ENCODE measurements at regions of chr20 and their contacts with region 1.

Region 1: DNA sequence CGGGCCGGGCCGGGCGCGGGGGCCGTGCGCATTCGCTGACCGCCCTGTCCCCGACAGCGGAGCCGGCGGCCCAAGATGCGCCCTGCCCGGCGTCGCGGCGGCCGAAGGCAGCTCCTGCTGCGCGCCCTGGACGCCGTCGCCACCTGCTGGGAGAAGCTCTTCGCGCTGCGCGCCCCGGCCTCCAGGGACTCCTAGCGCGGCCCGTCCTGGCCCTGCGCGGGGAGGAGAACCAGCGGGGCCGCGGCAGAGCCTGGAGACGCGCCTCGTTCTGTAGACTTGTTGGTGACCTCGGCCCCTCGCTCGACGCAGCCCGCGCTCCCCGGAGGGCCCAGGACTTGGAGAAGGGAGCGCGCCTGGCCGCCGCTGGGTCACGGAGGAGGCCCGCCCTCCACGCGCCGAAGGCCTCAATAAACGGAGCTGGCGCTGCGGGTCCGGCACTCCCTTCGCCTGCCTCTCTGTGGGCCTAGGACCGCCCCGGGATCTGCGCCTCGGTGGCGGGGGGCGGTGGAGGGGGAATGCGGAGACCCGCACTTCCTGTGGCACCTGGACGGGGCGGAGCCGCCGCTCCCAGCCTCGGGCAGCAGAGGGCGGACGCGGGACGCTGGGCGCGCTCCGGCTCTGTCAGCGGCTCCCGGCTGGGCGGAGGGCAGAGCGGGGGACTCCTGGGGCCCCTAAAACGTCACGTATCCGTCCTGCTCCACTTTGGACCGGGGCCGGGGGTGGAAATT is 2.7 kb downstream of the C20orf204 start:
- DNase-seq: peak; percentile 96
- H3K4me3 ChIP-seq: peak overlapping the region in 2 of 3 experiments; percentile 46 to 65
- H3K27ac ChIP-seq: peak overlapping the region; percentile 25
- H3K4me1 ChIP-seq: peaks cover 42% of the 10 kb centered on the region
- H3K27me3 ChIP-seq: no peaks in the 10 kb centered on the region
- CTCF ChIP-seq: peak; percentile 55 to 85
- POLR2A ChIP-seq: no peak

Region 2: DNA sequence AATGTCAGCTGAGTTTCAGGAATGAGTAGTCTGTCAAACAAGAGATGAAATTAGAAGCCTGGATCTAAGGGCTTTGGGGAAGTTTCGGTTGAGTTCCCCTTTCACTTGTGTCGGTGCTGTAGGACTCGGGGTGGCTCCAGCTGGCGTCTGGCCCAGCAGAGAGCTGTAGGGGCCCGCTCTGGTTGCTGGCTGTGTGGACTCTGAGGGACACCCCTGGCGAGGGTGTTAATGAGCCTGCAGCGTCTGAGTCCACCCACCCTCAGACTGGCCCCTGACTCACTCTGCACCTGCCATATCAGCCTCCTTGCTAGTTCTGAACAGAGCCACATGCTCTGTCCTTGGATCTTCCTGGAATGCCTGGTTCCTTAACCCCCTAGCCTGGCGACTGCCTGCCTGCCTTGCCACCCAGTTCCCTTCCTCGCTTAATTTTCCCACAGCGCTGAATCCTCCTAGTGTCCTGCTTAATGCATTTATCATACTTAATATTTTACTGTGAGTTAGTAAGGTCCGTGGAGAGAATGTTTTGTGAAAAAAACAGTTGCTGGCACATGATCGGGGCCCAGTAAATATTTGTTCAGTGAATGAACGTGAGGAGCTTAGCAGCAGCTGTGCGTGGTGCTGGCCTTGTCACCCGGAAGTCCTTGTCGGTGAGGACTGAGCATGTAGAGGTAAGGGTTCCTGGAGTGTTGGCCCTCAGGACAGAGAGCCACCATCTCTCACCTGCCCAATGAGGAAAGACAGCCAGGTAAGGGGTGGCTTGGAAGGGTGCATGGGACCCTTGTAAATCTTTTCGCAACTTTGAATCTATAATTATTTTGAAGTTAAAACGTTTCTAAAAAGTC is 142.2 kb before region 1 on chr20:
- CTCF ChIA-PET with region 1: no interaction called
- POLR2A ChIA-PET with region 1: no interaction called
- dilution Hi-C with region 1: no loop called
- intact Hi-C with region 1: no loop called
- DNase-seq: peak; percentile 45
- H3K4me3 ChIP-seq: peak overlapping the region; percentile 67 to 98 (median 86)
- H3K27ac ChIP-seq: peak overlapping the region; percentile 66
- H3K4me1 ChIP-seq: peaks cover 14% of the 10 kb centered on the region
- H3K27me3 ChIP-seq: no peaks in the 10 kb centered on the region
- CTCF ChIP-seq: no peak
- POLR2A ChIP-seq: no peak

Region 3: DNA sequence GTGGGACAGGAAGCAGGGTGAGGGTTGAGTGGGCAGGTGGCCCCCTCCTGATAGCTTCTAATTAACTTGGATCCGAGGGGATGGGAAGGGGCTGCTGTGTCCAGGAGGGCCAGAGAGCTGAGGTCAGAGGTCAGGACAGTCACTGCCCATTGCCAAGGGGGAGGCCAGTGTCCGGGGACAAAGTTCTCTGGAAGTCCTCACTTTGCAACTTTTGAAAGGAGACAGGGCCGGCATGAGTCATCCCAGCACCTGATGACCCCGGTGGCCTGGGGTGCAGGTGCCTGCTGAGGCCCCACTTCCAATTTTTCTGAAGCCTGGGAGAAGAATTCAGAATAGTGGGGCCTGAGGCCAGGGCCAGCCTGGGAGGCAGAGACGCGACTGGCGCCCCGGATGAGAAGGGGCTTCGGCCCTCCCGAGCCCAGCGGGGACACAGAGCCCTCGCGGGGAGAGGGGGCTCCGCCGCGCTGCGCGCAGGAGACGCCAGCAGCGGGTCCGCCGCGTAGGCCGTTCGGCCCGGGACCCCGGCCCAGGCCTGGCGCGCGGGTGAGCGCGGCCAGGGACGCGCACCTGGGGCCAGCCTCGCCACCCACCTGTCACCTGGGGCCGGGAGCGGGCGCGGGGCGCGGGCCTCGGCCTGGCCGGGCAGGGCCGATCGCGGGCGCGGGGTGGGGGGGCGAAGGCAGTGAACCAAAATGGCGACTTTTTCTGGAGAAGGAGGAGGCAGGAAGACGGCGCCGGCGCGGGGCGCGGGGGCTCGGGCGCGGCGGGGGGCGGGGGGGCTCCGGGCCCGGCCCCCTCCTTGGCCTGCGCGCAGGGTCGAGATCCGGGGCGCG is 69.6 kb before region 1 on chr20:
- CTCF ChIA-PET with region 1: no interaction called
- POLR2A ChIA-PET with region 1: no interaction called
- dilution Hi-C with region 1: no loop called
- intact Hi-C with region 1: no loop called
- DNase-seq: no peak
- H3K4me3 ChIP-seq: peak overlapping the region; percentile 15 to 57 (median 47)
- H3K27ac ChIP-seq: peak overlapping the region; percentile 10
- H3K4me1 ChIP-seq: peaks cover 23% of the 10 kb centered on the region
- H3K27me3 ChIP-seq: no peaks in the 10 kb centered on the region
- CTCF ChIP-seq: no peak
- POLR2A ChIP-seq: no peak

Region 4: GRCh38 chr20:63980806-63981728 is 57.7 kb before region 1 on chr20 and contains the start of gene PRPF6:
- CTCF ChIA-PET with region 1: interaction called, 34 read pairs
- POLR2A ChIA-PET with region 1: no interaction called
- dilution Hi-C with region 1: no loop called
- intact Hi-C with region 1: loop called (anchors 1 kb)
- DNase-seq: peak; percentile 94
- H3K4me3 ChIP-seq: peak within 1 kb of the TSS; percentile 25 to 67 (median 58)
- H3K27ac ChIP-seq: peak within 1 kb of the TSS; percentile 6
- H3K4me1 ChIP-seq: peaks cover 20% of the 10 kb centered on the region
- H3K27me3 ChIP-seq: no peaks in the 10 kb centered on the region
- CTCF ChIP-seq: peak; percentile 87 to 95
- POLR2A ChIP-seq: peak; percentile 66
- total RNA-seq, gene PRPF6: 64.2 and 67.4 TPM in 2 replicates

Region 5: DNA sequence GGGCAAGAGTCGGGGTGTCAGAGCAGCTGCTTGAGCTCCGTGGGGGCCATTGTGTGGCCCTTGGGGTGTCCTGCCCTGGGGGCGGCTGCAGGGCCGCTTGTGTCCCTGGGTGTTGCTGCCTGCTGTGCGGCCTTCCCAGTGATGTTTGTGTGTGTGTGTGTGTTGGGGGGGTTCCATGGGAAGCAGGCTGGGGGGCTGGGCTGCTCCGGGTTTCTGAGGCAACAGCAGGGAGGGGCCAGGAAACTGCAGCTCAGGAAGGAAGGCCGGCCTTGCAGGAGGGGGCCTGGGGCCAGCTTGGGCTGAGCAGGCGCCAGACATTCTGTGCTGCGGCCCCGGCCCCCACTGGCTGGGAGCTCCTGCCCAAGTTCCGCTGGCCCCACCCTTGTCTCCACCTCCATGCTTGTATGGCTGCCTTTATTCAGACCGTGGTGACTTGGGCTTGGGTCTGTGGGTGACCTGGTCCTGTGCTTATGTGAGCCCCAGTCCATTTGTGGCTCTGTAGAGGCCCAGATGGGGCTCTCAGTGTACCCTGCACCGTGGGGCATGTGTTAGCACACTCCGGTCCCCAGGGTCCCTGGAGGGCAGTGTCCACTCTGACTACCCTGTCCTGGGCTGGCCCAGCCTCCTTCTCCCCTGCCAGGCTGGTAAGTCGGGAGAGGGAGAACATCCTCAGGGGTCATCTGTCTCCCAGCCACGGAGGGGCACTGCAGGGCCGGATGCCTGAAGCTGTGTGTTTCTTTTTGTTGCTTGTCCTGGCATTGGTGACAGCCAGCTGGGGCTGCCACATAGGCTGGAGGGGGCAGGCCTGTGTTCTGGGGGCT is 15.3 kb after region 1 on chr20:
- CTCF ChIA-PET with region 1: interaction called, 412 read pairs
- POLR2A ChIA-PET with region 1: interaction called, 21 read pairs
- dilution Hi-C with region 1: no loop called
- intact Hi-C with region 1: loop called (anchors 1 kb)
- DNase-seq: peak; percentile 90
- H3K4me3 ChIP-seq: peak overlapping the region in 2 of 3 experiments; percentile 9 to 21
- H3K27ac ChIP-seq: peak overlapping the region; percentile 83
- H3K4me1 ChIP-seq: peaks cover 74% of the 10 kb centered on the region
- H3K27me3 ChIP-seq: no peaks in the 10 kb centered on the region
- CTCF ChIP-seq: peak; percentile 40 to 48
- POLR2A ChIP-seq: peak; percentile 93

Region 6: DNA sequence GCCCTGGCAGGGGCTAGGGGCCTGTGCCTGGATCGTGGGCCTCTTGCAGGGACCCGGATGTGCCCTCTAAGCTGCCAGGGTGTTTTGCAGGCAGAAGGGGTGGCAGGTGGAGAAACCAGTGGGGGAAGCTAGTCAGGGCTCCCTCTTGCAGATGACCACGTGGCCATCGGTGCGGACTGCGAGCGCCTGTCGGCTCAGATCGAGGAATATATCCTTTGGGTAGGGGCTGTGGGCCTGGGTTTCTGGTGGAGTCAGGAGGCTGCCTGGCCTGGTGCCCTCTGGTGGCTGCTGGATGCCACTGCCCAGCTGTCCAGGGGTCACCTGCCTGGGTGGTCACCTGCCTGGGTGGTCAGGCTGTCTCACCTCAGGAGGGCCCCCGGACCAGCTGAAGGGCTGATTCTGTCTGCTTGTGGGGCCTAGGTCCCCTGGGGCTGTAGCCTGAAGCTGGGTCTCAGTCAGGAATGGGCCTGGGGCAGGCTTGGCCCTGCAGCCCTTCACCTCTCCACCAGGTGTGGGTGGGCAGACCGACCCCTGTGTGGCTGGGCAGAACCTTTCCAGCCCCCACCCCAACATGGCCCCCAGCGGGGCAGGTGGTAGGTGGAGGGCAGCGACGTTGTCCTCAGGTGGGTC is 31.0 kb after region 1 on chr20:
- CTCF ChIA-PET with region 1: interaction called, 21 read pairs
- POLR2A ChIA-PET with region 1: no interaction called
- dilution Hi-C with region 1: no loop called
- intact Hi-C with region 1: loop called (anchors 1 kb)
- DNase-seq: peak; percentile 29
- H3K4me3 ChIP-seq: no peak overlapping the region
- H3K27ac ChIP-seq: no peak overlapping the region
- H3K4me1 ChIP-seq: no peaks in the 10 kb centered on the region
- H3K27me3 ChIP-seq: no peaks in the 10 kb centered on the region
- CTCF ChIP-seq: peak; percentile 79 to 95
- POLR2A ChIP-seq: no peak

Region 7: GRCh38 chr20:64119681-64120341 is 81.1 kb after region 1 on chr20:
- CTCF ChIA-PET with region 1: interaction called, 32 read pairs
- POLR2A ChIA-PET with region 1: no interaction called
- dilution Hi-C with region 1: no loop called
- intact Hi-C with region 1: loop called (anchors 1 kb)
- DNase-seq: peak; percentile 8
- H3K4me3 ChIP-seq: no peak overlapping the region
- H3K27ac ChIP-seq: no peak overlapping the region
- H3K4me1 ChIP-seq: no peaks in the 10 kb centered on the region
- H3K27me3 ChIP-seq: peaks cover 9 to 10% of the 10 kb centered on the region in 2 experiments
- CTCF ChIP-seq: no peak
- POLR2A ChIP-seq: no peak

Measured in endothelial cell of umbilical vein (primary cell).